ENCODE measurements at regions of chr3 and their contacts with region 1.

Region 1: DNA sequence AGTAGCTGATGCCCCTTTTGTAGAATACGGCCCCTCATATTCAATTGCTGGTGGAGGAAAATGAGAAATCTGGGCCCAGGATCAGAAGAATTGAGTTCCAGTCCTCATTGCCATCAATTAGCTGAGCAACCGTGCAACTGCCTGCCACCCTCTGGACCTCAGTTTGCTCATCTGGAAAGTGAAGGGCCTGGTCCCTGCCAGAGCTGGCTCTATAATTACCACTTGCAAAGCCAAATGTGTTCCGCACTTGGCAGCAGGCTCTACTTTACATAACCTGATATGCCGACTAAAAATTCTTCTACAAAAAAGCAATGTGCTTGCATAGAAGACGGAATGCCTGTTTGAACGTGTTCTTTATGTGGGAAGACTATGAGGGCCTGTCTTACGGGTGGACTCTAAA is 8.6 kb upstream of the ITGB5 start:
- DNase-seq: no peak
- H3K4me3 ChIP-seq: no peak overlapping the region
- H3K27ac ChIP-seq: no peak overlapping the region
- H3K4me1 ChIP-seq: no peaks in the 10 kb centered on the region
- H3K27me3 ChIP-seq: no peaks in the 10 kb centered on the region
- CTCF ChIP-seq: no peak
- POLR2A ChIP-seq: no peak

Region 2: DNA sequence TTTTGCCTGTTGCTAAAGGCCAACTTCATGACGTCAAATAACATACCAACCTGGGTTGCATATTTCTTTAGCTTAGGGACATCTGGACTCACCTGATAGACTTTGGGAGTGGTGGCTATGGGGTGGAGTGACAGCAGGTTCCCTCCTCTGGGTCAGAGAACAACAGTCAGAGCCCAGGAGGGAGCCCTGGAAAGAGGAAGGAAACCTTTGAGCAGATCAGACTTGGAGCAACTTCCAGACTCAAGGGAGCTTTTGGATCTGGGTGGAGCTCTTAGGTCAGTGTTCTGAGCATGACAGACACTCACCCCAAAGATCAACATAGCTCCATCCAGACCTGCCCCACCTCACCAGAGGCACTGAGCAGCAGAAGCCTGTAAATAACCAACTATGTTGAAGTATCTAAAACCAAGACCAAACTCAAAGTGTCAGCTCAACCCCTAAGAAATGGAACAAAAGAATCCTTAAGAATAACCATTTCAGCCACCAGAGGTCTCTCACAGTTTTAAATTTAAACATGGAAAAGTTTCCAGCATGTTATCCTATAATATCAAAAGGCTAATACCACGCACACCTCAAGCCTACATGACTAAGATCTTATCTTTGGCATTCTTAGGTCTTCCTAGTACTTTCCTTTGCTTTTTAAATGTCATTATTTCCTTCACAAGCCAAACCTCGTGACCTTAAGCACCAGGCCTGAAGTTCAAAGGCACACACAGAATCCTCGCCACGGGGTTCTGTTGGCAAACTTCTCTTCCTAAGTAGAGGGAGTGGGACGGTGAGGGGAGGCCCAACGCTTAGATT is 109.1 kb before region 1 on chr3:
- intact Hi-C with region 1: loop called (anchors 10 kb)
- DNase-seq: no peak
- H3K4me3 ChIP-seq: no peak overlapping the region
- H3K27ac ChIP-seq: peak overlapping the region; percentile 40 to 85
- H3K4me1 ChIP-seq: peaks cover 31% of the 10 kb centered on the region
- H3K27me3 ChIP-seq: no peaks in the 10 kb centered on the region
- CTCF ChIP-seq: peak; percentile 42 to 57 (median 46)
- POLR2A ChIP-seq: no peak

Region 3: DNA sequence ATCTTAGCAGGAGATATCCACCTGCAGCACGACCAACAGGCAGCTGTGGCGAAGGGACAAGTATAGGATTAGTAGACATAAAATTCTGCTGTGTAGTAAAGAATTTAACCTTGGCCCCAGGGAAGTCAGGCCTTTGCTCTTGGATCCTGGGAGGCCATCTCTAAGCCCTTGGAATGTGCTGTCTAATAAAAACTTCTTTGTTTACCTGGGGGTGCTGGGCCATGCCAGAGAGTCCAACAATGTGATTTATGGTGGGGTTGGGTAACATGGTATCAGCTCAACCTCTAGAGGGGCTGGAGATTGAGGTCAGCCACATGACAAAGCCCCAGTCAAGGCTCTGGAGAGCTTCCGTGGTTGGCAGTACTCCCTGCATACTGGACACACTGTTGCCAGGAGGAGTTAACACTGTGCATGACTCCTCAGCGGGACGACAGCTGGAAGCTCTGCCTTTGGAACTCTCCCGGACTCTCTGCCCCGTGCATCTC is 107.7 kb after region 1 on chr3:
- intact Hi-C with region 1: no loop called
- DNase-seq: peak; percentile 94
- H3K4me3 ChIP-seq: no peak overlapping the region
- H3K27ac ChIP-seq: no peak overlapping the region
- H3K4me1 ChIP-seq: peaks cover 31% of the 10 kb centered on the region
- H3K27me3 ChIP-seq: no peaks in the 10 kb centered on the region
- CTCF ChIP-seq: no peak
- POLR2A ChIP-seq: no peak

Region 4: GRCh38 chr3:125032100-125032643 is 136.4 kb after region 1 on chr3:
- intact Hi-C with region 1: no loop called
- DNase-seq: no peak
- H3K4me3 ChIP-seq: no peak overlapping the region
- H3K27ac ChIP-seq: no peak overlapping the region
- H3K4me1 ChIP-seq: peaks cover 6% of the 10 kb centered on the region
- H3K27me3 ChIP-seq: no peaks in the 10 kb centered on the region
- CTCF ChIP-seq: no peak
- POLR2A ChIP-seq: no peak